Left ventricle myocardium inferior (tissue), 1 donor: ENCODE measurements at regions of chr16 and their contacts with region 1.

Region 1: GRCh38 chr16:3123986-3124886 is 10.6 kb upstream of the ZNF213 start:
- DNase-seq: peak; percentile 97
- H3K4me3 ChIP-seq: peak overlapping the region; percentile 79
- H3K27ac ChIP-seq: peak overlapping the region; percentile 79
- H3K4me1 ChIP-seq: peaks cover 46% of the 10 kb centered on the region
- H3K27me3 ChIP-seq: no peaks in the 10 kb centered on the region
- CTCF ChIP-seq: peak; percentile 35

Region 2: GRCh38 chr16:3059000-3059722 is 65.1 kb before region 1 on chr16:
- intact Hi-C with region 1: loop called (anchors 10 kb)
- DNase-seq: peak; percentile 90
- H3K4me3 ChIP-seq: peak overlapping the region; percentile 98
- H3K27ac ChIP-seq: peak overlapping the region; percentile 90
- H3K4me1 ChIP-seq: peaks cover 33% of the 10 kb centered on the region
- H3K27me3 ChIP-seq: no peaks in the 10 kb centered on the region
- CTCF ChIP-seq: peak; percentile 93